Calu3 (cell line): ENCODE measurements at regions of chr5 and their contacts with region 1.

Region 1: GRCh38 chr5:43040287-43041098 is at the start of gene ANXA2R:
- DNase-seq: peak; percentile 92
- H3K4me3 Mint-ChIP-seq: peak within 1 kb of the TSS; percentile 90
- H3K27ac Mint-ChIP-seq: peak within 1 kb of the TSS; percentile 96
- H3K4me1 Mint-ChIP-seq: peaks cover 27% of the 10 kb centered on the region
- H3K27me3 Mint-ChIP-seq: no peaks in the 10 kb centered on the region
- CTCF ChIP-seq: peak; percentile 82
- total RNA-seq, gene ANXA2R: 8.0 and 9.4 TPM in 2 replicates

Region 2: DNA sequence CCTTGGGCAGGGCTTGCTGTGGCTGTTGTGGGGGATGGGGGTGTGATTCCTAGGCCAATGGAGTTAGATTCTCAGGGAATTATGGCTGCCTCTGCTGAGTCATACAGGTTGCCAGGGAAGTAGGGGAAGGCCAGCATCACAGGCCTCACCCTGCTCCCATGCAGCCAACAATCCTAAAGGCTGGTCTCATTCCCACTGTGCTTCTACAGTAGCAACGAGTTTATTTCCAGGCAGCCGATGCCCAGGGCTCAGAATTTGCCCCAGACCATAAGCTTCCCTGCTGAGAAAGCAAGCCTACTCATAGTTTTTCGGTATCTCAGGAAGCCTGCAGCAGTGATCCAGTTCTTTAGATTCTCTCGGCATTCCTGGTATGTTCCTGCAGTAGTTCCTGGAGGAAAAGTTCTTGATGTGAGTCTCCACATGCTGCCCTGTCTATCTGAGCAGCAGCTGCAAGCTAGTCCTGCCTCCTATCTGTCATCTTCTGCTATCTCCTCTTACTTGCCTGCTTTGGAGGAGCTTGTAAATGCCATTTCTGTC is 169.5 kb before region 1 on chr5:
- CTCF ChIA-PET with region 1: no interaction called
- intact Hi-C with region 1: no loop called
- DNase-seq: no peak
- H3K4me3 Mint-ChIP-seq: no peak overlapping the region
- H3K27ac Mint-ChIP-seq: no peak overlapping the region
- H3K4me1 Mint-ChIP-seq: no peaks in the 10 kb centered on the region
- H3K27me3 Mint-ChIP-seq: peaks cover 7% of the 10 kb centered on the region
- CTCF ChIP-seq: no peak

Region 3: GRCh38 chr5:42908509-42909488 is 131.7 kb before region 1 on chr5:
- CTCF ChIA-PET with region 1: interaction called, 13 read pairs
- intact Hi-C with region 1: loop called (anchors 1 kb)
- DNase-seq: peak; percentile 88
- H3K4me3 Mint-ChIP-seq: peak overlapping the region; percentile 83
- H3K27ac Mint-ChIP-seq: peak overlapping the region; percentile 79
- H3K4me1 Mint-ChIP-seq: peaks cover 6% of the 10 kb centered on the region
- H3K27me3 Mint-ChIP-seq: no peaks in the 10 kb centered on the region
- CTCF ChIP-seq: peak; percentile 85

Region 4: GRCh38 chr5:42985129-42986037 is 55.1 kb before region 1 on chr5:
- CTCF ChIA-PET with region 1: no interaction called
- intact Hi-C with region 1: loop called (anchors 2 kb)
- DNase-seq: peak; percentile 38
- H3K4me3 Mint-ChIP-seq: peak overlapping the region; percentile 95
- H3K27ac Mint-ChIP-seq: peak overlapping the region; percentile 99
- H3K4me1 Mint-ChIP-seq: peaks cover 63% of the 10 kb centered on the region
- H3K27me3 Mint-ChIP-seq: no peaks in the 10 kb centered on the region
- CTCF ChIP-seq: no peak

Region 5: GRCh38 chr5:43008369-43009153 is 31.9 kb before region 1 on chr5:
- CTCF ChIA-PET with region 1: interaction called, 13 read pairs
- intact Hi-C with region 1: no loop called
- DNase-seq: peak; percentile 92
- H3K4me3 Mint-ChIP-seq: peak overlapping the region; percentile 73
- H3K27ac Mint-ChIP-seq: peak overlapping the region; percentile 37
- H3K4me1 Mint-ChIP-seq: peaks cover 21% of the 10 kb centered on the region
- H3K27me3 Mint-ChIP-seq: no peaks in the 10 kb centered on the region
- CTCF ChIP-seq: no peak

Region 6: DNA sequence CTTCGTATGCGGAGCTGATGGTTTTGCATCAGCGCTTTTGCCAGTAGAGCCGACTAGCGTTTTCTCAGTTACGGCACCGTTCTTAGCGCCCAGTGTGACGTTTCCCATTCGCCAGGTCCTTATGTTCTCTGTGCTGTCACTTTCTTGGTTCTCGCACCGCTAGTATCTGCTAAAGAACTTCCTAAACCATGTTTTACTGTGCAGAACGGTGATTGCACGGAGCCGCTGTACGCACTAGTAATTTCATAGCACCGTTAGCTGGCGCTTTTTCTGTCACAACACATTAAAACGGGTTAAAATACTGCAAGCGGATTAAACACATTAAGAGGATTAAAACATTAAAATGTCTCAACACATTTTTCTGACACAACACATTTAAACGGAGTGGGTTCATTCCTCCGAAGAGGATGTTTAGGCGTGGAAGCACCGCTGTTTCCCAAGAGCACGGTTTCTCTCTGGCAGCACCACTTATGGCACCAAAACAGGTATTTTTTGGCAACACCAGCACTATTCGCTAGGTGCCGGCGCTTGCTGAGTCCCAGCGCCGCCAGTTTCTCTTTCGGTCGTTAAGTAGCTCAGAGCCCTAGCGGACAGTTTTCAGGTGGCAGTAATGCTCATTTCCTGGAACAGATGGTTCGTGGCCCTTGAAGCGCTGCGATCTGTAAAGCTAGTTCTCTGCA is 20.7 kb before region 1 on chr5:
- CTCF ChIA-PET with region 1: interaction called, 10 read pairs
- intact Hi-C with region 1: loop called (anchors 2 kb)
- DNase-seq: peak; percentile 79
- H3K4me3 Mint-ChIP-seq: peak overlapping the region; percentile 78
- H3K27ac Mint-ChIP-seq: peak overlapping the region; percentile 70
- H3K4me1 Mint-ChIP-seq: peaks cover 23% of the 10 kb centered on the region
- H3K27me3 Mint-ChIP-seq: no peaks in the 10 kb centered on the region
- CTCF ChIP-seq: no peak

Region 7: GRCh38 chr5:43066799-43067741 is 26.6 kb after region 1 on chr5:
- CTCF ChIA-PET with region 1: interaction called, 23 read pairs
- intact Hi-C with region 1: loop called (anchors 1 kb)
- DNase-seq: peak; percentile 86
- H3K4me3 Mint-ChIP-seq: peak overlapping the region; percentile 84
- H3K27ac Mint-ChIP-seq: peak overlapping the region; percentile 88
- H3K4me1 Mint-ChIP-seq: peaks cover 41% of the 10 kb centered on the region
- H3K27me3 Mint-ChIP-seq: no peaks in the 10 kb centered on the region
- CTCF ChIP-seq: no peak

Region 8: GRCh38 chr5:43105369-43106289 is 65.1 kb after region 1 on chr5:
- CTCF ChIA-PET with region 1: interaction called, 3 read pairs
- intact Hi-C with region 1: loop called (anchors 2 kb)
- DNase-seq: peak; percentile 92
- H3K4me3 Mint-ChIP-seq: peak overlapping the region; percentile 67
- H3K27ac Mint-ChIP-seq: peak overlapping the region; percentile 21
- H3K4me1 Mint-ChIP-seq: no peaks in the 10 kb centered on the region
- H3K27me3 Mint-ChIP-seq: no peaks in the 10 kb centered on the region
- CTCF ChIP-seq: peak; percentile 99